ENCODE measurements at regions of chr18 and their contacts with region 1.

Region 1: DNA sequence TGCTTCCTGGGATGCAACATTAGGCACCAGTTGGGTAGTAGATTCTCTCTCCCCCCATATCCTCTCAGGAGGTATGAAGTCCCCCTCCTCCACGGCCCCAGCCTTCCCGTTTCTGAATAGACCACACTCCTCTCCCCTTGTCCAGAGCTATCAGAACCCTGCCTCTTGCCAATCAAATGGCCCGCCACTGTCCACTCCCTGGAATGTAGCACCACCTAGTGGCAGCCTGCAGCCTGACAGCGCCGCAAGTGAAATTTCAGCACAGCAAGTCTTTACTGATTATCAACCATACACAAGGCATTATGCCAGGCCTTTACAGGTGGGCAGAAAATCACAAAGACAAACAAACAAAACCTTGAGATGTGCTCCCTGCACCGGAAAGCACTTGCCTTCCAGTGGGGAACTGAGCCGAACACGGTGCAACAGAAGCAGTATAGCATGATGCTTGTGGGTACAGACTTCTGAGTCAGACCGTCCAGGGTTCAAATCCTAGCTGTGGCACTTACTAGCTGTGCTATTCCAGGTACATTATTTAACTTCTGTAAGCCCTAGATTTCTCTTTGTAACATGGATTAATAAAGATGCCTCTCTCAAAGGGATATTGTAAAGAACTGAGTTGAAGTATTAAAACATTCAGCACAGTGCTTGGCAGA is 174.0 kb downstream of the SMAD2 start:
- DNase-seq: peak; percentile 83
- ATAC-seq: peak; percentile 67
- H3K4me3 Mint-ChIP-seq: no peak overlapping the region
- H3K27ac Mint-ChIP-seq: no peak overlapping the region
- H3K4me1 Mint-ChIP-seq: peaks cover 9% of the 10 kb centered on the region; the same call in 1 of the 2 replicates
- H3K27me3 Mint-ChIP-seq: no peaks in the 10 kb centered on the region; the same call in 1 of the 2 replicates
- CTCF ChIP-seq: peak; percentile 90

Region 2: DNA sequence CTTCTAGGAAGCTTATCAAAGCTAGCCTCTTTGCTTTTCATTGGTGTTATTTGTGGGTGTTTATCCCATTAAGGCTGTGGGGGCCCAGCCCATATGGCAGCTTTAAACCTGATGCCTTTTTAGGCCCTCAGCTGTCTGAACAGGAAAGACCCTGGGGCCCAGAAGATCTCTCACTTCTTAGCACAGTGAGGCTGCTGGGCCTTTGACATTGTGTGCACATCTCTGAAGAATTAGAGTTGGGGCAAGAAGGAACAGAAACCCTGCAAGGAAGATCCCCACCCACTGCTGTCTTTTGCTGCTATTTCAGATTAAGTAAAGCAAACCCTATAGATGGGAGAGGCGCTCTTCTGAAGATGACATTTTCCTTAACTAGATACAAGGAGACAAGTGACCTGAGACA is 76.0 kb before region 1 on chr18:
- CTCF ChIA-PET with region 1: no interaction called
- POLR2A ChIA-PET with region 1: no interaction called
- DNase-seq: no peak
- ATAC-seq: no peak
- H3K4me3 Mint-ChIP-seq: no peak overlapping the region
- H3K27ac Mint-ChIP-seq: no peak overlapping the region
- H3K4me1 Mint-ChIP-seq: no peaks in the 10 kb centered on the region
- H3K27me3 Mint-ChIP-seq: no peaks in the 10 kb centered on the region
- CTCF ChIP-seq: no peak

Region 3: GRCh38 chr18:47737956-47738355 is 18.5 kb before region 1 on chr18:
- CTCF ChIA-PET with region 1: interaction called, 11 read pairs
- POLR2A ChIA-PET with region 1: no interaction called
- DNase-seq: no peak
- ATAC-seq: no peak
- H3K4me3 Mint-ChIP-seq: no peak overlapping the region
- H3K27ac Mint-ChIP-seq: no peak overlapping the region
- H3K4me1 Mint-ChIP-seq: peaks cover 8% of the 10 kb centered on the region
- H3K27me3 Mint-ChIP-seq: peaks cover 5% of the 10 kb centered on the region
- CTCF ChIP-seq: no peak

Region 4: DNA sequence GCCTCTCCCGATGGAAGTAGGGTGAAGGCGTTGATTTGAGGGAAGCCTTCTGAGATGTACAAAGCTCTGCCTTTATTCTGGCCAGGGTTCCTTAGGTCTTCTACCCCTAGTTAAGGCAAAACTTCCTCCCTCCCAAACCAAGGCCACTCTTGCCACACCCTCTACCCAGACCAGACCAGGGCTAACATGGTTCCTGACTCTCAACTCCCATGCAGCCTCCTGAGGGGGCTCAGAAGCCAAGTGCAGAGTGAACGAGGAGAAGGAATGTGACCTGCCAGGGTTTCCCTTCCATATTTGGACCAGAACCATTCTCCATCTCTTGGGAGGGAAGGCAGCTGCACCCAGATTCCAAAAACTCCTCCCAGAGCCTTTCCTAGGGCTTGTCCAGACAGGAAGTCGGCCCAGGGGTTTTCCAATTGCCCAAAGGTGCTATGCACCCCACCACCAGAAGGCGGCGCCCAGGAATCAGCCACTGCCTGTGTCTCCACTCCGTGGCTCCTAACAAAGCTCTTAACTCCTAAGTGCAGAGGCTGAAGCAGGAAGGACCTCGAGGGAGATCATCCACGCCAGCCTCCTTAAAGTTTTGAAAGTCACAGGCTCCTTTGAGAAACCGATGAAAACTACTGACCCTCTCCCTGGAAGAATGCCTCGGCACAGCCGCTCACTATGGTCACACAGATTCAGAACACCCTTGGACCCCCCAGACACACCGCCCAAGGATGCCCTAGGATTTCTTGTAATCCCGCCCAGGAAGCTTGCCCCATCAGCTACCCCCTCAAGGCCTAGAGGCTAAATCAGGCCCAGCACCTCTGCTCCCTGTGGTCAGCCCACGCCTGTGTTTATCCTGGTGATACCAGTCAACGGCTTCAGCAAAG is 16.1 kb after region 1 on chr18:
- CTCF ChIA-PET with region 1: interaction called, 13 read pairs
- POLR2A ChIA-PET with region 1: no interaction called
- DNase-seq: peak; percentile 91
- ATAC-seq: peak; percentile 92
- H3K4me3 Mint-ChIP-seq: no peak overlapping the region
- H3K27ac Mint-ChIP-seq: no peak overlapping the region
- H3K4me1 Mint-ChIP-seq: peaks cover 9% of the 10 kb centered on the region
- H3K27me3 Mint-ChIP-seq: no peaks in the 10 kb centered on the region; the same call in 1 of the 2 replicates
- CTCF ChIP-seq: peak; percentile 95

Region 5: DNA sequence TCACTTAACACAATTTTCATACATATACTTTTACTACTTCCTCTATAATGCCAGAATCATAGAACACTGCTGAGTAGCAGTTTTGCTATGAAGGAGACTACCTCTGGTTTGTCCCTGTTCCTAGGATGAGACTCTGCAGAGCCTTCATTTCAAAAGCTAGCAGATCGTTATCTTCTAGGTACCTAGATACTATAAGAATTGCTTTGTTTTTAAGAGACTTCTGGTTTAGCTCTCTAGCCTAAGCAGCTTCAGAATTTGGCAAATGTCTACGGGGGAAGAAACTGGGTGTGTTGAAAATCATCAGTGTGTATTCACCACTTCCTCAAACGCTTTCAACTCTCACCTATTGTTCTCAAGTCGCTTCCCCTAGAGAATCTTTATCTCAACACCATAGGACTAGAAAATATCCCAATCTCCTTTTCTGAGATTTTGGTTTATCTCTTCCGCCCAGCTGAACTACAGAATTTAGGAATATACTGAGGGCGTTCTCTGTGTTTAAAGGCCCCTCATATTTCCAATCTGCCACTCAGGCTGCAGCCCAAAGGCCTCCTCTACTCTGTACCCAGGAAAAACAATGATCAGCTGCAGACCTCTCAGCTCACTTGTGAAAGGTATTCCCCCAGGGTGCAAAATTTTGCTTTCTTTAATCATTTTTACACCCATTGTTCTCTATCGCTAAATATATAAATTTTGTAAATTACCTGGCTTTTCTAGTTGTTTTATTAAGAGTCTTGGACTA is 145.3 kb after region 1 on chr18:
- CTCF ChIA-PET with region 1: no interaction called
- POLR2A ChIA-PET with region 1: no interaction called
- DNase-seq: no peak
- ATAC-seq: peak; percentile 59
- H3K4me3 Mint-ChIP-seq: no peak overlapping the region
- H3K27ac Mint-ChIP-seq: 0 out of 2 replicates have a peak overlapping the region, but pooled peaks have one; percentile 10
- H3K4me1 Mint-ChIP-seq: peaks cover 80% of the 10 kb centered on the region
- H3K27me3 Mint-ChIP-seq: no peaks in the 10 kb centered on the region
- CTCF ChIP-seq: no peak